Dorsolateral prefrontal cortex (tissue), 120 donors: ENCODE measurements at regions of chr3 and their contacts with region 1.

Region 1: GRCh38 chr3:137946345-137946973 is 63.5 kb upstream of the CLDN18 start:
- DNase-seq: peak in 4 of 10 donors; percentile 25 to 34 (median 27)
- H3K4me3 ChIP-seq: no peak overlapping the region
- H3K27ac ChIP-seq: no peak overlapping the region
- H3K27me3 ChIP-seq: peaks cover 0 to 10% (median 0%) of the 10 kb centered on the region in 45 donors
- CTCF ChIP-seq: peak; percentile 58 to 86 (median 72)

Region 2: GRCh38 chr3:137105277-137105977 is 841.0 kb before region 1 on chr3:
- intact Hi-C with region 1: loop called (anchors 2 to 10 kb)
- DNase-seq: peak in 3 of 10 donors; percentile 23 to 33 (median 30)
- H3K4me3 ChIP-seq: peak overlapping the region in 9 of 59 donors; percentile 0 to 23 (median 7)
- H3K27ac ChIP-seq: no peak overlapping the region
- H3K27me3 ChIP-seq: peaks cover 0 to 46% (median 19%) of the 10 kb centered on the region in 45 donors
- CTCF ChIP-seq: peak; percentile 66 to 93 (median 78)

Region 3: GRCh38 chr3:137978311-137978710 is 31.9 kb after region 1 on chr3:
- intact Hi-C with region 1: no loop called
- DNase-seq: no peak
- H3K4me3 ChIP-seq: no peak overlapping the region
- H3K27ac ChIP-seq: no peak overlapping the region
- H3K27me3 ChIP-seq: peaks cover 0 to 8% (median 0%) of the 10 kb centered on the region in 45 donors
- CTCF ChIP-seq: no peak